Endothelial cell of umbilical vein (primary cell): ENCODE measurements at regions of chr17 and their contacts with region 1.

Region 1: GRCh38 chr17:27236717-27237315 is 57.1 kb upstream of the WSB1 start:
- DNase-seq: peak; percentile 86
- H3K4me3 ChIP-seq: no peak overlapping the region
- H3K27ac ChIP-seq: no peak overlapping the region
- H3K4me1 ChIP-seq: no peaks in the 10 kb centered on the region
- H3K27me3 ChIP-seq: no peaks in the 10 kb centered on the region
- CTCF ChIP-seq: peak; percentile 71 to 73
- POLR2A ChIP-seq: no peak

Region 2: GRCh38 chr17:27091043-27091497 is 145.7 kb before region 1 on chr17:
- CTCF ChIA-PET with region 1: no interaction called
- POLR2A ChIA-PET with region 1: no interaction called
- dilution Hi-C with region 1: no loop called
- intact Hi-C with region 1: no loop called
- DNase-seq: no peak
- H3K4me3 ChIP-seq: no peak overlapping the region
- H3K27ac ChIP-seq: no peak overlapping the region
- H3K4me1 ChIP-seq: no peaks in the 10 kb centered on the region
- H3K27me3 ChIP-seq: no peaks in the 10 kb centered on the region
- CTCF ChIP-seq: no peak
- POLR2A ChIP-seq: no peak

Region 3: GRCh38 chr17:27226615-27227230 is 10.1 kb before region 1 on chr17:
- CTCF ChIA-PET with region 1: interaction called, 16 read pairs
- POLR2A ChIA-PET with region 1: no interaction called
- dilution Hi-C with region 1: no loop called
- intact Hi-C with region 1: no loop called
- DNase-seq: peak; percentile 56
- H3K4me3 ChIP-seq: no peak overlapping the region
- H3K27ac ChIP-seq: no peak overlapping the region
- H3K4me1 ChIP-seq: peaks cover 9% of the 10 kb centered on the region
- H3K27me3 ChIP-seq: no peaks in the 10 kb centered on the region
- CTCF ChIP-seq: no peak
- POLR2A ChIP-seq: no peak

Region 4: GRCh38 chr17:27306276-27306835 is 69.5 kb after region 1 on chr17:
- CTCF ChIA-PET with region 1: interaction called, 109 read pairs
- POLR2A ChIA-PET with region 1: interaction called, 4 read pairs
- dilution Hi-C with region 1: no loop called
- intact Hi-C with region 1: no loop called
- DNase-seq: no peak
- H3K4me3 ChIP-seq: no peak overlapping the region
- H3K27ac ChIP-seq: no peak overlapping the region
- H3K4me1 ChIP-seq: peaks cover 4% of the 10 kb centered on the region
- H3K27me3 ChIP-seq: no peaks in the 10 kb centered on the region
- CTCF ChIP-seq: no peak
- POLR2A ChIP-seq: no peak

Region 5: DNA sequence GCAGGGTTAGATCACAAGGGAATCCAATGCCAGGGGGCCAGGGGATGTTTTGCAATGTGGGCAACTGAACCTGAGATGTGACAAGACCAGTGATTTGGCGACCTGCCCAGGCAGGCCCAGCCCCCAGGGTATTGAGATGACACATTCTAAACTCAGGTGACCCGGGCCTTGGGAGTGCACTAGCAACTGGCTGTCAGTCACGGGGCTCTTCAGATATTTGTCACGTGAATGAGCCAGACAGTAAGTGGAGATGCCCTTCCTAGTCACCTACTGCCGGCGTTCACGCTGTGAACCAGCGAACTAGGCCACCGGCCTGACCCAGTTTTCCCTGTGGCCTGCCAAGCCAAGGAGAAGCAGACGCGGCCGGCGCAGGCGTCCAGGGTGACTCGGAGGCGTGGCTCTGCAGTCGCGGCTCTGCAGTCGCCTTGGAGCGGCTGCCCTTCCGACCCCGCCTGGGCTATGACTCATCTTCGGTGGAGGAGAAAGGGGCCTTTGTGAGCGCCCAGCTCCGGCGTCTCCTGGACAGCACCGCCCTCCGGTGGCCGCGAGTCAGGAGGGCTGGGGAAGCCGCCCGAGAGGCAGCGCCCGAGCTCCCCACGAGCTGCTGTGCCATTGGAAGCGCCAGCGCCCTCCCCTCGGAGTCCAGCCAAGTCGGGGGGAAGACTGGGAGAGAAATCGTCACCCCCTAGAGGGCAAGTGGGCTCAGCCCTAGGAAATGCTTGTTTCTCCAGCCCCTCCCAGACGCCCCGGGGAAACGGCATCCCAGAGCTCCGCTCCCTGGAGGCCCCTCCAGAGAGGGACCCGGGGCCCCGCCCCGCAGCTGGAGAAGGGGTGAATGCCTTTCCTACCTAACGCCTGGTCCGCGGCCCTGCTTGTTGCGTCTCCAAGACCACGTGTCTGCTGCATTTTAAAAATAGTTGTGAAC is 95.9 kb after region 1 on chr17:
- CTCF ChIA-PET with region 1: interaction called, 88 read pairs
- POLR2A ChIA-PET with region 1: interaction called, 4 read pairs
- dilution Hi-C with region 1: no loop called
- intact Hi-C with region 1: loop called (anchors 1 kb)
- DNase-seq: peak; percentile 98
- H3K4me3 ChIP-seq: peak overlapping the region; percentile 3 to 65 (median 17)
- H3K27ac ChIP-seq: peak overlapping the region; percentile 78
- H3K4me1 ChIP-seq: peaks cover 16% of the 10 kb centered on the region
- H3K27me3 ChIP-seq: no peaks in the 10 kb centered on the region
- CTCF ChIP-seq: peak; percentile 91 to 97
- POLR2A ChIP-seq: peak; percentile 39

Region 6: DNA sequence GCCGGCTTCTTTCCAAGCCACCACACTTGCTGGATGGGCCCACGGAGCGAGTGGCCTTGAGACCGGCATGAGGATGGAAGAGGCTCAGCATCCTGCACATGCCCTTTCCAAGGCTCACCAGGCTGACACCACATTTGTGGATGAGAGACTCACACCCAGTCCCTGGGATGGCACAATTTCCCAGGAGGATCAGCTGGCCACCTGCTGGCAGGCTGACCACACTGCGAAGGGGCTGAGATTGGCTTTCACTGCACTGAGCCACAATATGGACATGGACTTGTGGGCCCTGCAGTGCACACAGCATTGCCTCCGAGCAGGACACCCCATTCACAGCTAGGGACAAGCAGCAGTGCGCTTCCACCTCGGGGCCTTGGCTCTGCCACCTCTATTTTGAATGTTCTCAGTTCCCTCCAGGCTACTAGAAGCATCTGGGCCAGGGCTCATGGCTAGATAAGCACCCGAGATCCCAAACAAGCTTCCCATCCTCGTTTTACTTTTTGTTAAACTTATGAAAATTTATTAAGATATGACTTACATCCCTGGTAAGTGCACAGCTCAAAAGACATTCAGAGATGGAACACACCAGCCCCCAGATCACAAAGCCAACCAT is 194.2 kb after region 1 on chr17:
- CTCF ChIA-PET with region 1: interaction called, 15 read pairs
- POLR2A ChIA-PET with region 1: no interaction called
- dilution Hi-C with region 1: no loop called
- intact Hi-C with region 1: loop called (anchors 1 kb)
- DNase-seq: peak; percentile 74
- H3K4me3 ChIP-seq: no peak overlapping the region
- H3K27ac ChIP-seq: no peak overlapping the region
- H3K4me1 ChIP-seq: no peaks in the 10 kb centered on the region
- H3K27me3 ChIP-seq: no peaks in the 10 kb centered on the region
- CTCF ChIP-seq: peak; percentile 82 to 93
- POLR2A ChIP-seq: no peak

Region 7: GRCh38 chr17:27654654-27655524 is 418.1 kb after region 1 on chr17:
- CTCF ChIA-PET with region 1: interaction called, 28 read pairs
- POLR2A ChIA-PET with region 1: no interaction called
- dilution Hi-C with region 1: no loop called
- intact Hi-C with region 1: loop called (anchors 2 kb)
- DNase-seq: peak; percentile 66
- H3K4me3 ChIP-seq: no peak overlapping the region
- H3K27ac ChIP-seq: no peak overlapping the region
- H3K4me1 ChIP-seq: no peaks in the 10 kb centered on the region
- H3K27me3 ChIP-seq: no peaks in the 10 kb centered on the region
- CTCF ChIP-seq: peak; percentile 77 to 91
- POLR2A ChIP-seq: no peak